ENCODE measurements at regions of chr12 and their contacts with region 1.

Region 1: DNA sequence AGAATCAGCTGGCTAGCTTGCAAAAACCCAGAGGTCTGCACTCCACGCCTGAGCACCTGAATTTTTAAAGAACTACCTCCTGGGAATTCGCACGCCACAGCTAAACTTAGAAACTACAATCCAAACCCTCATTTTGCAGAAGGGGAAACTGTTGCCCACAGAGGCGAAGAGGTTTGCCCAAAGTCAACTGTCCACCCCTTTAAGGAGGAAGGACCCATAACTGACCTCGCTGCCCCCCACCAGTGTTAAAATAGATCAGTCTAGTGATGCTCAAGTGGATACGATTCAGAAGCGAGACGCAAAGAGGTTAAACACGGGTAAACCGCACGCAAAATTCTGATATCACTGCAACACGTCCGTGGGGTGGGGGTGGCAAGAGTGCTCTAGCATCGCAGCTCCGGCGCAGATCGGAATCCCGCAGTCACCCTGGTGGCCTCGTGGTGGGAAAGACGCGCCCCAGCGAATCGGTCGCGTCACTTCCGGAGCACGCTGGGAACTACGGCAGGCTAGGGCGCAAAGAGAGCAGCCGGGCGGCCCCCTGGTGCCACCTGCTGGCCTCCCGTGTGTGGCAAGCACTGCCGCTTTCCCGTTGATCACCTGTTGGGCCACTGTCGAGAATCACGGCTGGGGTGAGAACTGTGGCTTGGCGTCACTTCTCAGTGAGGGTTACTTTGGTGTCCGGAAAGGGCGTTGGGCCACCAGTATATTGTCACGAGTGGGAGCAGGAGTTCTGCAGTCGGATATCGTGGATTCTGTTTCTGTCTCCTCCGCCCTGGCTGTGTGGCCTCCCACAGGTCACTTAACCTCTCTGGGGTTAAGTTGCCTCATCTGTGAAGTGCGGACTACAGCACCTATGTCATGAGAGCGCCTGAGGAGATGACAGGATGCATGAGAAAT is at the start of gene ALKBH2:
- DNase-seq: peak; percentile 93
- CTCF ChIP-seq: peak; percentile 98

Region 2: DNA sequence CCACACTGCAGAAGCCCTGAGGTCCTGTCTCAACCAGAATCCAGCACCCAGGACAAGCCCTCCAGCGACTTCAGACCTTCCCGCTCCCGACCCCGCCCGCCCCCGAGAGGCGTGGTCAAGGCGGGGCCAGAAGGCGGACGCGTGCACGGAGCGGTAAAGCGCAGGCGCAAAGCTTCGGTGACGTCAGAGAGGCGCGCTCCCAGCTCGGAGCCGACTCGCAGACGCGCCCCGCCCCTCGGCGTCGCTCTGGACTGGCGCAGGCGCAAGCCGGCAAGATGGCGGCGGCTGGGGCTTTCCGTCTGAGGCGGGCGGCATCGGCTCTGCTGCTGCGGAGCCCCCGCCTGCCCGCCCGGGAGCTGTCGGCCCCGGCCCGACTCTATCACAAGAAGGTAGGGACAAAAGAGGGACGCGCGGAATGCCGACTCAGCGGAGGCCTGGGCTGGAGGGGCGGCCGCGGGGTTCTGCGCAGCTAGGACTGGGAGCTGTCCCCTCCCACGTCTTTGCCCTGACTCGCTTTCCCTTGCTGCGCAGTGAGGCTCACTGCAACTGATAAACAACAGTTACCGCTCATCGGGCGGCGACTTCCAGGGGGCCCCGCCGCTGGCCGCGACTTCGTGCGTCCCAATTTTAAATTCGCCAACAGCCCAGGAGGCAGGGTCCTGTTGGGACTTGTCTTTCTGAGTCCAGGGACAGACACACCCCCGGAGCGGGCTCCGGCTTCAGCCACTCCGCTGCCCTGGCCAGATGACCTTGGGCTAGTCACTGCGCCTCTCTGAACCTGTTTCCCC is 530.7 kb before region 1 on chr12 and contains the start of gene ISCU:
- in situ Hi-C with region 1: loop called (anchors 25 kb)
- DNase-seq: peak; percentile 98
- CTCF ChIP-seq: no peak

Region 3: DNA sequence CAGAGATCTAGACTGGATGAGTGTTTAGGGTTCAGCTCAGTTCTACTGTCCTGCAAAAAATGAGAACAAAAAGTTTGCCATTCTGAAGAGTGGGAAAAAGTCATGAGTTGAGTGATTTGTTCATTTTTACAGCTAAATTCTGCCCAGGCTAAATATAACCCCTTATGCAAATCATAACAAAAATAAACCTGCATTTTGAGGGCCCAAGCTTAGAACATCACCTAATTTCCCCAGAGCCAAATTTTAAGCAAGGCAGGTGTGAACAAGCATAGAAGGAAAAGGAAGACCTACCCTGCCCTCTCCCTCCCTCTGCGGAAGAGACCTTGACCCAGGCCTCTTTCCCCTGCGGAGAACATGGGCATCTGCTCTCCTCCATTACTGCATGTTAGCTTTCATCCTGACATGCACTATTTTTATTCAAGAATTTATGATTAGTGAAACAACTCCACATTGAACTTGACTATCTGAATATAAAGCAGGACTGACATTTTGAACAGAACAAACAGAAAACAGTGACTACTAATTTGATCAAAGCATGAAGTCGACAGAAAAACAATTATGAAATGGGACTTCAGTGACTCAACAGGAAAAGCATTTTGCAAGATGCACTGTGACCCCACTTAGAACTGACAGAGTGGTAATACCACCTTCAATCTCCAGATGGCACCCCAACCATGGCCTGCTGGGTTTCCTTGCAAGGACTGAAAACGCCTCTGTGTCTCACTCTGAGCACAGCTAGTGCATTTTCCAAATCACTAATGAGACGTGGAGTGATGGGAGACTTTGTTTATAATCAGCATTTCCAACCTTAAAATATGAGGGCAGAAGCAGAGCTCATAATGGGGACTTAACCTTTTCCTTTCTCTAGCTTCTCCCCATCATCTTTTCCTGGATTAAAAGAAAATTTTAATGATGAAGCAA is 428.7 kb before region 1 on chr12:
- in situ Hi-C with region 1: loop called (anchors 25 kb)
- DNase-seq: peak; percentile 70
- CTCF ChIP-seq: peak; percentile 83

Region 4: DNA sequence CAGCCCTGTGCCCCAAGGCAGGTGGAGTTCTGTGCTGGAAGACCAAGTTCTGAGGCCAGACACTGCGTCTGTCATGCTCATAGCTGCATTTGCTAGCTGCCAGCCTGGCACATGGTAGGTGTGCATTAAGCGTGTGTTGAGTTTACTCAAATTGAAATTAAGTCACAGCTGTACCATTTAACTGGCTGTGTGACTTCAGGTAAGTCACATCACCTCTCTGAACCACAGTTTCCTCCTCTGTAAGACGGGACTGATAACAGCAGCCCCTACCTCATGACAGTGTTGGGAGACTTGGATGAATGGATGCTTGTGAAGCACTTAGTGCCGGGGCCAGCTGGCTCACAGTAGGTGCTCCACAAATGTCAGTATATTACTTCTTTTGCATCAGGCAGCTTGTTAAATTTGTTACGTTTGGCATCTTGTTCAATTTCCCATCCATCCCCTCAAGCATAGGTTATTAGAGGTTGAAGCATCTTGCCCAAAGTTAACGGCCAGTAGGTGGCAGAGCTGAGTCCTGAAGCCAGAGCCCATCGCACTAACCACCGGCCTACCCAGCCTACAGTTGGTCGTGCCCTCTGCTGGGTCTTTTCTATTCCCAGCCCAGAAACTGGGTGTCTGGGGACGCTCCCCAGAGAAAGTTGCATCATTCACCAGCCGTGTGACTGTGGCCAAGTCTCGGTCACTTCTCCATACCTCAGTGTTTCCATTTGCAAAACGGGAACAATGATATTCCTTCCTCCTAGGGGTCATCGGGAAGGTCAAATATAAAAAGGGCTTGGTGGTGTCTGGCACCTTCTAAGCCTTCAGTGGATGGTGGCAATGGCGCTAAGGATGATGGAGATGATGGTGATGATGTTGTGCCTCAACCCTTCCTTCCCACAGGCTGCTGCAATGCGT is 208.9 kb before region 1 on chr12:
- in situ Hi-C with region 1: loop called (anchors 25 kb)
- DNase-seq: peak; percentile 76
- CTCF ChIP-seq: peak; percentile 70

Measured in GM13976 (cell line).